H1 (cell line): ENCODE measurements at regions of chr15 and their contacts with region 1.

Region 1: GRCh38 chr15:64809649-64810496 is 15.6 kb downstream of the PIF1 start:
- DNase-seq: peak in 1 of 2 experiments; percentile 97
- H3K4me3 ChIP-seq: peak overlapping the region in 3 of 4 experiments; percentile 26 to 53 (median 26); a peak in 7 of 8 replicates
- H3K27ac ChIP-seq: peak overlapping the region; percentile 95
- H3K4me1 ChIP-seq: peaks cover 28 to 56% (median 44%) of the 10 kb centered on the region in 4 experiments
- H3K27me3 ChIP-seq: no peaks in the 10 kb centered on the region
- CTCF ChIP-seq: peak; percentile 87 to 94 (median 93)
- EP300 ChIP-seq: no peak
- POLR2A ChIP-seq: no peak; a peak in 1 of 3 replicates
- RAD21 ChIP-seq: peak; percentile 87 to 95

Region 2: GRCh38 chr15:64702816-64703646 is 106.8 kb before region 1 on chr15:
- CTCF ChIA-PET with region 1: interaction called, 3 read pairs
- POLR2A ChIA-PET with region 1: interaction called, 65 read pairs
- DNase-seq: peak; percentile 86 to 100
- H3K4me3 ChIP-seq: peak overlapping the region; percentile 70 to 88 (median 85)
- H3K27ac ChIP-seq: peak overlapping the region; percentile 82
- H3K4me1 ChIP-seq: peaks cover 12 to 23% (median 17%) of the 10 kb centered on the region in 4 experiments
- H3K27me3 ChIP-seq: no peaks in the 10 kb centered on the region
- CTCF ChIP-seq: no peak
- EP300 ChIP-seq: peak in 1 of 2 experiments; percentile 51; a peak in 1 of 3 replicates
- POLR2A ChIP-seq: peak; percentile 69 to 90
- RAD21 ChIP-seq: no peak; a peak in 1 of 4 replicates

Region 3: GRCh38 chr15:64749999-64750657 is 59.7 kb before region 1 on chr15:
- CTCF ChIA-PET with region 1: interaction called, 883 read pairs
- POLR2A ChIA-PET with region 1: interaction called, 64 read pairs
- DNase-seq: peak in 1 of 2 experiments; percentile 47
- H3K4me3 ChIP-seq: no peak overlapping the region
- H3K27ac ChIP-seq: no peak overlapping the region
- H3K4me1 ChIP-seq: peaks cover 0 to 13% (median 9%) of the 10 kb centered on the region in 4 experiments; a peak in 5 of 7 replicates
- H3K27me3 ChIP-seq: no peaks in the 10 kb centered on the region
- CTCF ChIP-seq: peak; percentile 56 to 67 (median 63)
- EP300 ChIP-seq: 0 out of 3 replicates have a peak, but pooled peaks of 1 of the 2 experiments have one; percentile 18
- POLR2A ChIP-seq: no peak
- RAD21 ChIP-seq: peak; percentile 60 to 64

Region 4: DNA sequence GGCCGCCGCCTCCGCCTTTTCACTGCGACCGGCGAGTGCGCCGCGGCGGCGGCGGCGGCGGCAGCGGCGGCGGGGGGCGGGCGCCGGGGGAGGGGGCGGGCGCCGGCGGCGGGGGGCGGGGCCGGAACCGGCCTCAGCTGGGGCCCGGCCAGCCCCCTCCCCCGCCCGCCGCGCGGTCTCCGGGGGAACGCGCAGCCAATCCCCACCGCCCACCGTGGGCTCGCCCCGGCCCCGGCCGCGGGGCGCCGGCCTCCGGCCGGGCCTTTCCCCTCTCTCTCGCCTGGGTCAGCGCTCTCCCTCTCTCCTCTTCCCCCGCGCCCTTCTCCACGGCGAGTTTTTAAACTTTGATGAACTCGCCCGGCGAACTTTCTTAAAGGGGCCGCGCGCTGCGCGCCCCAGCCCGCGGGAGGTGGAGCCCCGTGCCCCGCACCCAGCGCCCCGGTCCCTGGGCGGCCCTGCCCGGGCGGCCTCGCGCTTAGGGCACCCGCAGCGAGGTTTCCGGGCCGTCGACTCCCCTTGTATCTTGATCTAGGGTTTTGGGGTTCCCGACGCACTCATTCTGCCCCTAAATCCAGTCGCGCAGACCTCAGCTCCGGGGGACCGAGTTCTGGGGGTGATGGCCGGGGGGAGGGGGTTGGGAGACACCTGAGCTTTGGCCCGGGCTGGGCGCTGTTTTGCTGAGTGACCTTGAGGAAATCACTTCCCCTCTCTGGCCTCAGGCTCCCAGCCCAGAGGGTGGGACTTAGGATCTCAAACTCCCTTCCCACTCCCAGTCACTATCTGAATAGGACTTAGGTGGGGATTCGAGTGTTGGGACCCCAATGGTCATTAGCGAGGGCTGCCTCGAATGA is 34.1 kb before region 1 on chr15 and contains the start of gene RBPMS2:
- CTCF ChIA-PET with region 1: interaction called, 883 read pairs
- POLR2A ChIA-PET with region 1: interaction called, 748 read pairs
- DNase-seq: peak in 1 of 2 experiments; percentile 62
- H3K4me3 ChIP-seq: peak within 1 kb of the TSS; percentile 74 to 95 (median 88)
- H3K27ac ChIP-seq: peak within 1 kb of the TSS; percentile 81; the same call in 1 of the 2 replicates
- H3K4me1 ChIP-seq: peaks cover 23 to 34% (median 30%) of the 10 kb centered on the region in 4 experiments
- H3K27me3 ChIP-seq: no peaks in the 10 kb centered on the region
- CTCF ChIP-seq: no peak
- EP300 ChIP-seq: no peak
- POLR2A ChIP-seq: no peak; a peak in 1 of 3 replicates
- RAD21 ChIP-seq: no peak
- total RNA-seq, gene RBPMS2: 238 and 243 TPM in 2 replicates

Region 5: GRCh38 chr15:64836023-64836536 is 26.2 kb after region 1 on chr15:
- CTCF ChIA-PET with region 1: interaction called, 53 read pairs
- POLR2A ChIA-PET with region 1: interaction called, 381 read pairs
- DNase-seq: no peak
- H3K4me3 ChIP-seq: 0 out of 8 replicates have a peak overlapping the region, but pooled peaks of 1 of the 4 experiments have one; percentile 7
- H3K27ac ChIP-seq: no peak overlapping the region
- H3K4me1 ChIP-seq: peaks cover 0 to 7% (median 4%) of the 10 kb centered on the region in 4 experiments; a peak in 5 of 7 replicates
- H3K27me3 ChIP-seq: no peaks in the 10 kb centered on the region
- CTCF ChIP-seq: no peak
- EP300 ChIP-seq: no peak
- POLR2A ChIP-seq: no peak
- RAD21 ChIP-seq: no peak

Region 6: GRCh38 chr15:64905119-64905831 is 95.4 kb after region 1 on chr15:
- CTCF ChIA-PET with region 1: interaction called, 10 read pairs
- POLR2A ChIA-PET with region 1: interaction called, 6 read pairs
- DNase-seq: peak; percentile 93 to 96
- H3K4me3 ChIP-seq: peak overlapping the region; percentile 22 to 59 (median 42); a peak in 7 of 8 replicates
- H3K27ac ChIP-seq: peak overlapping the region; percentile 48; the same call in 1 of the 2 replicates
- H3K4me1 ChIP-seq: peaks cover 0 to 8% (median 3%) of the 10 kb centered on the region in 4 experiments; a peak in 5 of 7 replicates
- H3K27me3 ChIP-seq: no peaks in the 10 kb centered on the region
- CTCF ChIP-seq: peak; percentile 81 to 88 (median 85)
- EP300 ChIP-seq: no peak
- POLR2A ChIP-seq: no peak; a peak in 1 of 3 replicates
- RAD21 ChIP-seq: peak; percentile 83 to 89

Region 7: DNA sequence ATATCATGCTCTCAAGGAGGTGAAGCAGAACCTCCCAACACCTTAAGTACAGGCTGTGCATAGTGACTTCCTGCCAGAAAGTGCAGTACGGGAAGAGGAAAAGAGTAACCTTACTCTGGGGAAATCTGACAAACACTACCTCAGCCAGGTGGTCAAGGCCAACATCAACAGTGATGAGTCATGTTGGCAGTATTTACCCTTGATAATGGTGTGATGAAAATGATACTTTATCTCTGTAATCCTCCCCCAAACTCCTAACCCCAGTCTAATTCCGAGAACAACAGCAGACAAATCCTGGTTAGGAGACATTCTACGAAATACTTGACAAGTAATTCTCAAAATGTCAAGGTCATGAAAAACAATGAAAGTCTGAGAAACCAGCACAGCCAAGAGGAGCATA is 128.3 kb after region 1 on chr15:
- CTCF ChIA-PET with region 1: no interaction called
- POLR2A ChIA-PET with region 1: no interaction called
- DNase-seq: peak in 1 of 2 experiments; percentile 10
- H3K4me3 ChIP-seq: no peak overlapping the region
- H3K27ac ChIP-seq: no peak overlapping the region
- H3K4me1 ChIP-seq: no peaks in the 10 kb centered on the region
- H3K27me3 ChIP-seq: no peaks in the 10 kb centered on the region
- CTCF ChIP-seq: no peak
- EP300 ChIP-seq: no peak
- POLR2A ChIP-seq: no peak
- RAD21 ChIP-seq: no peak